ENCODE measurements at regions of chr7 and their contacts with region 1.

Region 1: GRCh38 chr7:6306471-6306870 is 34.0 kb upstream of the CYTH3 start:
- DNase-seq: no peak
- H3K4me3 ChIP-seq: no peak overlapping the region
- H3K27ac ChIP-seq: no peak overlapping the region
- H3K27me3 ChIP-seq: no peaks in the 10 kb centered on the region
- CTCF ChIP-seq: no peak

Region 2: DNA sequence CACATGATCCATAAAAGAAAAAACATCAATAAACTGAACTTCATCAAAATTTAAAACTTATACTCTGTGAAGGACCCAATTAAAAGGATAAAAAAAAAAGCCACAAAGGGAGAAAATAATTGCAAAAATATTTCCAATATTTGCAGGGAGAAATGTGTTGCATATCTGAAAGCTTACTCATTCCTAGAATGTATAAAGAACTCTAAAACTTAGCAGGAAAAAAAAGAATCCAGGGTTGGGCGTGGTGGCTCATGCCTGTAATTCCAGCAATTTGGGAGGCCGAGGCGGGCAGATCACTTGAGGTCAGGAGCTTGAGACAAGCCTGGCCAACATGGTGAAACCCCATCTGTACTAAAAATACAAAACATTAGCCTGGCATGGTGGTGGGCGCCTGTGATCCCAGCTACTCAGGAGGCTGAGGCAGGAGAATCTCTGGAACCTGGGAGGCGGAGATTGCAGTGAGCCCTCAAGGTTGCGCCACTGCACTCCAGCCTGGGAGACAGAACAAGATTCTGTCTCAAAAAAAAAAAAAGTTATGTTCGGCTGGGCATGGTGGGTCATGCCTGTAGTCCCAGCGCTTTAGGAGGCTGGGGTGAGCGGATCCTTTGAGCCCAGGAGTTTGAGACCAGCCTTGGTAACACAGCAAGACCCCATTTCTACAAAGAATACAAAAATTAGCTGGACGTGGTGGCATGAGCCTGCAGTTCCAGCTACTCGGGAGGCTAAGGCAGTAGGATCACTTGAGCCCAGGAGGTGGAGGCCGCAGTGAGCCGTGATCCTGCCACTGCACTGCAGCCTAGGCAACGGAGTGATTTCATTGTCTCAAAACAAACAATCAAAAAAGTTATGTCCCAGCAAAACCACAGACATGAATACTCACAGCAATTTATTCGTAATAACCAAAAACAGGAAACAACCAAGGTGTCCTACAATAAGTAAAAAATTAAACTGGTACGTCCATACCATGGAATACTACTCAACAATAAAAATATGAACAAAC is 22.8 kb before region 1 on chr7:
- CTCF ChIA-PET with region 1: no interaction called
- POLR2A ChIA-PET with region 1: interaction called, 13 read pairs
- DNase-seq: peak; percentile 34
- H3K4me3 ChIP-seq: no peak overlapping the region
- H3K27ac ChIP-seq: peak overlapping the region; percentile 96
- H3K27me3 ChIP-seq: no peaks in the 10 kb centered on the region
- CTCF ChIP-seq: no peak

Region 3: DNA sequence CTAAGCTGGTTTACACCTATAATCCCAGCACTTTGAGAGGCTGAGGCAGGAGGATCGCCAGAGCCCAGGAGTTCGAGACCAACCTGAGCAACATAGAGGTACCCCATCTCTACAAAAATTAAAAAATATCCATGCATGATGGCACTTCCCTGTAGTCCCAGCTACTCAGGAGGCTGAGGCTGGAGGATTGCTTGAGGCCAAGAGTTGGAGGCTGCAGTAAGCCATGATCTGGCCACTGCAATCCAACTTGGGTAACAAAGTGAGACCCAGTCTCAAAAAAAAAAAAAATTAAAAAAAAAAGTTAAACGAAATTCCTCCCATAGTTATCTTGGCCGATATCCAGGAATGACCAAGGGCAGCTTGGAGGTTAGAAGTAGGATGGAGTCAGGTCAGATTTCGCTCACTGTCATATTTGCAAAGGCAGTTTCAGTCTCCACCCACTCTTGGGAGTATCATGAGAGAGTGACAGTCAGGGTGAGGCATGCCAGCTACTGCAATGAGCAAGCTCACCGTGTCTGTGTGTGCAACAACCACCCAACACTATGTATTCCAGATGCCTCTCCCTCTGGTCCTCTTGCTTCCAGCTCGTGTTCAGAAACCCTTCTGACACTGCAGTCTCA is 264.8 kb after region 1 on chr7:
- CTCF ChIA-PET with region 1: no interaction called
- POLR2A ChIA-PET with region 1: no interaction called
- DNase-seq: no peak
- H3K4me3 ChIP-seq: no peak overlapping the region
- H3K27ac ChIP-seq: no peak overlapping the region
- H3K27me3 ChIP-seq: peaks cover 3% of the 10 kb centered on the region
- CTCF ChIP-seq: no peak